PC-3 (cell line): ENCODE measurements at regions of chr1 and their contacts with region 1.

Region 1: GRCh38 chr1:114695430-114696058 is at the start of gene AMPD1:
- DNase-seq: peak; percentile 6
- ATAC-seq: no peak
- H3K4me3 ChIP-seq: no peak within 1 kb of the TSS
- H3K27ac ChIP-seq: no peak within 1 kb of the TSS
- H3K4me1 ChIP-seq: no peaks in the 10 kb centered on the region
- H3K27me3 ChIP-seq: no peaks in the 10 kb centered on the region
- CTCF ChIP-seq: no peak
- total RNA-seq, gene AMPD1: not detected in 2 replicates

Region 2: DNA sequence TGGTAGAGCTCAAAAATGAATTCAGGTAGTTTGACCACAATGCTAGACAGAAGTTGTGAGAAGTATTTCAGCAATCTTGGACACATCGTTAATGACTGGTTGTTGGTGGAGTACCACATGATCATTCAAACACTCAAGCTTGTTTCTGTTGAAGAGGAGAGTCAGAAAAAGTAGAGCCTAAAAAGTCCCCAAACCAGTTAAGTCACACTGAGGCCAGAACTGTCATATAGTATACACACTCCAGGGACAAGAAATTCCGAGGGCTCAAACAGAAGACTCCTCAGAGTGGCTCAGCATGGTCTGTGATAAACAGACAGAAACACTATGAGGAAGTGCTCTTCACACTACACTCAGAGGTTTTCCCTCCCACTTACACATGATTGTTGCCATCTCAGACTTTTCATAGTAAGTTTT is 190.4 kb before region 1 on chr1:
- CTCF ChIA-PET with region 1: no interaction called
- POLR2A ChIA-PET with region 1: no interaction called
- intact Hi-C with region 1: no loop called
- DNase-seq: peak; percentile 13
- ATAC-seq: no peak
- H3K4me3 ChIP-seq: no peak overlapping the region
- H3K27ac ChIP-seq: no peak overlapping the region
- H3K4me1 ChIP-seq: peaks cover 21% of the 10 kb centered on the region
- H3K27me3 ChIP-seq: no peaks in the 10 kb centered on the region
- CTCF ChIP-seq: no peak

Region 3: DNA sequence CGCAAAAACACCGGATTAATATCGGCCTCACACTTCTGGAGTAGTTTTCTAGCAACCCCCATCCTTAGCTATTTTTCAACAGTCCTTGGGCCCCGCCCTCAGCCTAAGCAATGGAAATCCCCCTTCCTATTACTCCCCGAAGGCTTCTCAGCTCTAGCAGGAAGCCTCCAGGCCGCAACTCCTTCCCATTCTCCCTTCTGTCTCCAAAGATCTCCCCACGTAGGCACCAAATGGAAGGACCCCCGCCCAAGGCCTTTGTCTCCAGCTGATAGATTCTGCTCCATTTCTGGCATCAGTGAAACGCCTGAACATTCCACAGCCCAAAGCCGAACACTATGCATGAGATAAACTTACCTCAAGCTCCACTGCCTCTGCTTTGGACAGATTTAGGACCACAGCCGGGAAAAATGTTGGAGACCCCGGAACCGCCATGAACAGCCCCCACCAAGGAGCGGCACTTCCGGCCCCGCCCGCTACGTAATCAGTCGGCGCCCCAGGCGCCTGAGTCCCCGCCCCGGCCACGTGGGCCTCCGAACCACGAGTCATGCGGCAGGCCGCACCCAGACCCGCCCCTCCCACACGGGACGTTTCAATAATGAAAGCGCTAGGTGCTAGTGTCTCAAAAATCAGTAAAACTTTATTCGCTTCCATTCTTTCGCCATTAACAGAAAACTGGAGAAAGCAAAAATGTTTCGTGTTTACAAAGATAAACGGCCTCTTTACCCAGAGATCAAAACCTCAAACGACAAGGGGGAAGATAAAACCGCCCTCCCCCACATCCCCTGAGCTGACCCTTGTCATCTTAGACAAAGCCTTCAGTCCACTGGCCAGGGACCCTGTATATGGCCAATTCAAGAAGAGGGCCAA is 21.0 kb after region 1 on chr1 and contains the start of gene NRAS:
- CTCF ChIA-PET with region 1: no interaction called
- POLR2A ChIA-PET with region 1: interaction called, 10 read pairs
- intact Hi-C with region 1: no loop called
- DNase-seq: peak; percentile 65
- ATAC-seq: peak; percentile 73
- H3K4me3 ChIP-seq: peak within 1 kb of the TSS; percentile 68
- H3K27ac ChIP-seq: peak within 1 kb of the TSS; percentile 56
- H3K4me1 ChIP-seq: peaks cover 26% of the 10 kb centered on the region
- H3K27me3 ChIP-seq: no peaks in the 10 kb centered on the region
- CTCF ChIP-seq: no peak
- total RNA-seq, gene NRAS: 12.6 and 15.1 TPM in 2 replicates